Heart right ventricle (tissue), 16 donors: ENCODE measurements at regions of chr16 and their contacts with region 1.

Region 1: DNA sequence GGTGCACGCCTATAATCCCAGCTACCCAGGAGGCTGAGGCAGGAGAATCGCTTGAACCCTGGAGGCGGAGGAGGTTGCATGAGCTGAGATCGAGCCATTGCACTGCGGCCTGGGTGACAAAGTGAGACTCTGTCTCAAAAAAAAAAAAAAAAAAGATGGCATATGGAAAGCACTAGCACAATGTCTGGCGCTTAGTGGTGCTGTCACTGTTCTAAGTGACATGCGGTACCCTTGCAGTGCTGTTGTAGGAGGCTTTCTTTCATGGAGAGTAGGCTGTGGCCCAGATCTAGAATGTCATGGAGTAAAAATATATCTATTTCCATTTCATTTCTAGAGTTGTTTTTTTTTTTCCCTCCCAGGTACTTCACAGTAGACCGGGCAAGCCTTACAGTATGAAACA is 14.6 kb upstream of the METTL9 start:
- DNase-seq: no peak
- ATAC-seq: no peak
- H3K4me3 ChIP-seq: no peak overlapping the region
- H3K27ac ChIP-seq: no peak overlapping the region
- H3K4me1 ChIP-seq: peaks cover 0 to 20% (median 0%) of the 10 kb centered on the region in 9 donors
- H3K27me3 ChIP-seq: no peaks in the 10 kb centered on the region
- CTCF ChIP-seq: no peak

Region 2: GRCh38 chr16:21638573-21638975 is 53.8 kb after region 1 on chr16:
- intact Hi-C with region 1: loop called (anchors 1 to 10 kb)
- DNase-seq: no peak
- ATAC-seq: no peak
- H3K4me3 ChIP-seq: no peak overlapping the region
- H3K27ac ChIP-seq: peak overlapping the region in 1 of 10 donors; percentile 18
- H3K4me1 ChIP-seq: peaks cover 0 to 13% (median 0%) of the 10 kb centered on the region in 9 donors
- H3K27me3 ChIP-seq: no peaks in the 10 kb centered on the region
- CTCF ChIP-seq: no peak

Region 3: GRCh38 chr16:21646721-21647561 is 62.1 kb after region 1 on chr16:
- intact Hi-C with region 1: loop called in 3 of 10 experiments (anchors 5 to 10 kb)
- DNase-seq: no peak
- ATAC-seq: peak in 1 of 8 donors; percentile 32
- H3K4me3 ChIP-seq: no peak overlapping the region
- H3K27ac ChIP-seq: peak overlapping the region in 8 of 10 donors; percentile 46 to 86 (median 69)
- H3K4me1 ChIP-seq: peaks cover 4 to 78% (median 27%) of the 10 kb centered on the region in 9 donors
- H3K27me3 ChIP-seq: no peaks in the 10 kb centered on the region
- CTCF ChIP-seq: no peak

Region 4: GRCh38 chr16:21708533-21709115 is 123.8 kb after region 1 on chr16:
- intact Hi-C with region 1: loop called in 9 of 10 experiments (anchors 1 to 5 kb)
- DNase-seq: peak; percentile 28 to 77
- ATAC-seq: peak in 2 of 8 donors; percentile 19 to 49
- H3K4me3 ChIP-seq: no peak overlapping the region
- H3K27ac ChIP-seq: no peak overlapping the region
- H3K4me1 ChIP-seq: peaks cover 0 to 7% (median 0%) of the 10 kb centered on the region in 9 donors
- H3K27me3 ChIP-seq: peaks cover 0 to 7% (median 0%) of the 10 kb centered on the region in 7 donors
- CTCF ChIP-seq: peak; percentile 67 to 89 (median 84)

Region 5: DNA sequence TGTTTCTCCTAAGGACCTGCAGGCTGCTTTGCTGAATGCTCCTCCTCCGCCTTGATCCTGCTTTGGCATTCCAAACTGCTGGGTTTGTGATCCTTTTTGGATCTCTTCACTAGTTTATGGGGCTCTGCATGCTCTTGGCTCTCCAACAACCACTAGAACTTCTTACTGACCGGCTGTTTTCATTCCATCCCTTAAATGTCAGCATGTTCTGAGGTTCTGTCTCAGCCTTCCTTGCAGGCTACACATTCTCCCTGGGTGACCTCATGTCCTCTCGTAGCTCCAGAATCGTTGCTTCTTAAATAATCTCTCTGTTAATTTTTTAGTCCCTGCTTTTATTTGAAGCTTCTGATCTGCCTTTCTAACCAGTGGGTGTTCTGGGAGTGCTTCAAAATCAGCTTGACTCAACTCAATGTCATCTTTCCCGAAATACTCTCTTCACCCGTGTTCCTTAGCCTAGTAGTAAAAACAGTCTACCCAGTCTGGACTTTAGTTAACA is 1110.1 kb after region 1 on chr16:
- intact Hi-C with region 1: loop called in 2 of 10 experiments (anchors 1 to 2 kb)
- DNase-seq: peak in 1 of 2 donors; percentile 44
- ATAC-seq: peak; percentile 75 to 94 (median 89)
- H3K4me3 ChIP-seq: no peak overlapping the region
- H3K27ac ChIP-seq: peak overlapping the region in 9 of 10 donors; percentile 13 to 56 (median 34)
- H3K4me1 ChIP-seq: peaks cover 0 to 17% (median 6%) of the 10 kb centered on the region in 9 donors
- H3K27me3 ChIP-seq: no peaks in the 10 kb centered on the region
- CTCF ChIP-seq: no peak